ENCODE measurements at regions of chr9 and their contacts with region 1.

Region 1: GRCh38 chr9:109440797-109441287 is 57.3 kb downstream of the PTPN3 start:
- DNase-seq: peak; percentile 79
- H3K4me3 Mint-ChIP-seq: no peak overlapping the region
- H3K27ac Mint-ChIP-seq: no peak overlapping the region
- H3K4me1 Mint-ChIP-seq: peaks cover 16% of the 10 kb centered on the region
- H3K27me3 Mint-ChIP-seq: peaks cover 6% of the 10 kb centered on the region

Region 2: DNA sequence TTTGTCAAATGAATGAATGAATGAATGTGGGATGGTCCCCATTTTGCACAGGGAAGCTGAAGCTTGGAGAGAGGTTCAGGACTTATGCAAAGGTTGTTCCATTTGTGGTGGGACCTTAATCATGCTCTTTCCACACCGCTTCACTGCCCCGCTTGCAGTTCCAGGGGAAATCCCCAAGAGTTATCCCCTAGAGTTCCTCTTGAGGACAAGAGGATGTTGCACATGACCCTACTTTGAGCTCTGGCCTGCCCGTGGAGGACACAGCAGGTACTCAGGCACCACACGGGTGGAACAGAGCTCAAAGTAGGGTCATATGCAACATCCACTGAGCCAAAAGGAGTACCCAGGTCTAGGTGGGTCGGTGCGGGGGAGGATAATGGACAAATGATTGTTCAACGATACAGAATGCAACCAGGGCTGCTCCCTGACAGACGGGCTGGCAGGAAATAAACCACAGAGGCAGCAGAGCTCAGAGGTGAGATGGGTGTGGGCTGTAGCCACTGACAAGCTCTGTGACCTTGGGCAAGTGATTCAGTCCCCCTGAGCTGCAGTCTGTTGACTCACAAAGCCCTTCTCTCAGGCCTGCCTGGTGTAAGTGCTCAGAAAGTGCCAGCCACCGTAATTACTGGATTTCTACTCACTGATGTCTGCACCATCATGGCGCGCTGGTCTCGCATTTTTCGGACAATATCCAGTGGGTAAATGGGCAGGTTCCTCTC is 59.7 kb before region 1 on chr9:
- CTCF ChIA-PET with region 1: no interaction called
- intact Hi-C with region 1: no loop called
- DNase-seq: no peak
- H3K4me3 Mint-ChIP-seq: no peak overlapping the region
- H3K27ac Mint-ChIP-seq: no peak overlapping the region
- H3K4me1 Mint-ChIP-seq: no peaks in the 10 kb centered on the region
- H3K27me3 Mint-ChIP-seq: peaks cover 9% of the 10 kb centered on the region

Region 3: GRCh38 chr9:109520478-109521132 is 79.8 kb after region 1 on chr9:
- CTCF ChIA-PET with region 1: interaction called, 14 read pairs
- intact Hi-C with region 1: loop called (anchors 1 kb)
- DNase-seq: peak; percentile 72
- H3K4me3 Mint-ChIP-seq: no peak overlapping the region
- H3K27ac Mint-ChIP-seq: no peak overlapping the region
- H3K4me1 Mint-ChIP-seq: no peaks in the 10 kb centered on the region
- H3K27me3 Mint-ChIP-seq: peaks cover 10% of the 10 kb centered on the region

Region 4: DNA sequence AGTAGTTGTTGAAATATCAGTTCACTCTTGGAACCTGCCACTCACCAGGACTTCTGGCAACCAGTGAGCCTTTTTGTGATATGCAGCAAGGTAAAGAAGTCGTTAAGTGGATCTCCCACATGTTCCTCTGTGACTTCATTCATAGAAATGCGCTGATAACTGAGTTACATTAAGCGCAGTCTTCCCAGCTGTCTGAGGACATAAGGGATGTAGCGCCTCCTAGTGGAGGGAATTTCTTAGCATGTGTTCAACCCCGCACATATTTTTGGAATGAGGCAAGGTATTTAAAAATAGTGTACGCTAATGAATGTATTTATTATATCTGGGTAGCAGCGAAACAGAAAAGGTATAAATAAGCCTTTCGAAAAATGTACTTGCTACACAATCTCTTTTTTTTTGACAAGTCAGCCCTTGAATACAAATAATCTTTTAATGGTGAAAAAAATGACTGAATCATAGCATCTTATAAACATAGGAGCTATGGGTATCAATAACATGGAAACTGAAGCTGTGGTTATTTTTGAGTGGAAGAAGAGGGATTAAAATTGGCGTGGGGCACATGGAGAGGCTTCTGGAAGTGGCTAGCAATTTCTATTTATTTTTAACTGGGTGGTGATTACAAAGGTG is 377.1 kb after region 1 on chr9:
- CTCF ChIA-PET with region 1: interaction called, 3 read pairs
- intact Hi-C with region 1: loop called (anchors 1 kb)
- DNase-seq: peak; percentile 72
- H3K4me3 Mint-ChIP-seq: no peak overlapping the region
- H3K27ac Mint-ChIP-seq: no peak overlapping the region
- H3K4me1 Mint-ChIP-seq: no peaks in the 10 kb centered on the region
- H3K27me3 Mint-ChIP-seq: peaks cover 13% of the 10 kb centered on the region

Region 5: DNA sequence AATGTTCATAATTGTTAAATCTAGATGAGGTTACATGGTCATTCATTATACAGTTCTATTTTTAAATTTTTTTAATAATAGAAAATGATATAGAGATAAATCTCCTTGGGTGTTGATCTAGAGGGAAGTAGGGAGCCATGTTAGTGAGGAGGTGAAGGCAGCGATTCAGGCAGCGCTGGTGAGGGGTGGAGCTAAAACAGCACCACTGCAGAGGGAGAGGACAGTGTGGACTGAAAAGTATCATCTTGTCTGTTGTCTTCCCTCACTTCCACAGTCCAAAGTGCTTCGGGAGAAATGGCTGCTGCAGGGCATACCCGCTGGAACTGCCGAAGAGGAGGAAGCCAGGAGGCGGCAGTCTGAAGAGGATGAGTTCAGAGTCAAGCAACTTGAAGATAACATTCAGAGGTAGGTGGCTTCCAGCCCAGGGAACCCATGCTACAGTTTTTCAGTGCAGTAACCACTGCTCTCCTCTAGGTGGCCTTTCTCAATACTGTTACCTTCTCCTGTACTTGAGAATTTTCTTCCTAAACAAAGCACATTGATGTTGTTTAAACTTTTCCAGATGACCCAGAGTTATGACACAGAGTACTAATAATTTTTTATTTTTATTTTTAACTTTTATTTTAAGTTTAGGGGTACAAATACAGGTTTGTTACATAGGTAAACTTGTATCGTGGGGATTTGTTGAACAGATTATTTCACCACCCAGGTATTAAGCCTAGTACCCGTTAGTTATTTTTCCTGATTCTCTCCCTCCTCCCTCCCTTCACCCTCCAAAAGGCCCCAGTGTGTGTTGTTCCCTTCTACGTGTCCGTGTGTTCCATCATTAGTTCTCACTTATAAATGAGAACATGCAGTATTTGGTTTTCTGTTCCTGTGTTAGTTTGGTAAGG is 439.7 kb after region 1 on chr9:
- CTCF ChIA-PET with region 1: no interaction called
- intact Hi-C with region 1: loop called (anchors 10 kb)
- DNase-seq: peak; percentile 62
- H3K4me3 Mint-ChIP-seq: peak overlapping the region; percentile 43
- H3K27ac Mint-ChIP-seq: no peak overlapping the region
- H3K4me1 Mint-ChIP-seq: peaks cover 18% of the 10 kb centered on the region
- H3K27me3 Mint-ChIP-seq: peaks cover 5% of the 10 kb centered on the region

Region 6: GRCh38 chr9:110217656-110218099 is 776.8 kb after region 1 on chr9:
- CTCF ChIA-PET with region 1: no interaction called
- intact Hi-C with region 1: loop called (anchors 2 kb)
- DNase-seq: no peak
- H3K4me3 Mint-ChIP-seq: no peak overlapping the region
- H3K27ac Mint-ChIP-seq: no peak overlapping the region
- H3K4me1 Mint-ChIP-seq: no peaks in the 10 kb centered on the region
- H3K27me3 Mint-ChIP-seq: no peaks in the 10 kb centered on the region

Measured in activated naive CD4-positive, alpha-beta T cell treated with anti-CD3 and anti-CD28 coated beads for 36 hours (primary cell).